ENCODE measurements at regions of chr11 and their contacts with region 1.

Region 1: GRCh38 chr11:12043959-12044819 is 35.8 kb upstream of the DKK3 start:
- DNase-seq: peak; percentile 48
- H3K4me3 Mint-ChIP-seq: no peak overlapping the region
- H3K27ac Mint-ChIP-seq: no peak overlapping the region
- H3K4me1 Mint-ChIP-seq: peaks cover 23% of the 10 kb centered on the region
- H3K27me3 Mint-ChIP-seq: peaks cover 6% of the 10 kb centered on the region

Region 2: DNA sequence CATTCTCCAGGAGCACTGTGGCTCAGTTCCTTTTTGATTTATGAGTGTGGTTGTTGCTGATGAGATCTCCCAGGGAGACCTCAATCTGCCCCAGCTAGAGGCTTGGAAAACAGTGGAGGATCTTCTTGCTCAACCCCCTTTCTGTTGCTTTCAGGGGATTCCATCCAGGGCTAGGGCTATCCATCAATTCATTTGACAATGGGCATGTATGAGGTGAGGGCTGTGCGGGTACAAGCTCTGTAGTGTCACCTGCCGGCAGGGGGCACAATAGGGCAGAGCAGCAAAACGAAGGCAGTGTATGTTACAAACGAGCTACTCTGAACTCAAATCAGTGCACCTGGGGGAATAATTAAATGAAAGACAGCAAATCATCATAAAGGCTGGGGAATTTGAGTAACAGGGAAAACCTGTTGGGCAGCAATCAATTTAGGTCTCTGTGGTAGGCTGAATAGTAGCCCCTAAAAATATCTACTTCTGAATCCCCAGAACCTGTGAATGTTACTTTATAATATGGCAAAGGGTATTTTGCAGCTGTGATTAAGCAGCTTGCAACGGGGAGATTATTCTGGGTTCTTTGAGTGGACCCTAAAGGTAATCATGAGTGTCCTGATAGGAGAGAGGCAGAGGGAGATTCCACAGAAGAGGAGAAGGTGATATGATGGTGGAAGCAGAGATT is 1016.0 kb before region 1 on chr11:
- intact Hi-C with region 1: loop called (anchors 10 kb)
- DNase-seq: peak; percentile 57
- H3K4me3 Mint-ChIP-seq: no peak overlapping the region
- H3K27ac Mint-ChIP-seq: no peak overlapping the region
- H3K4me1 Mint-ChIP-seq: no peaks in the 10 kb centered on the region
- H3K27me3 Mint-ChIP-seq: peaks cover 16% of the 10 kb centered on the region

Region 3: GRCh38 chr11:11584446-11584810 is 459.8 kb before region 1 on chr11:
- intact Hi-C with region 1: no loop called
- DNase-seq: no peak
- H3K4me3 Mint-ChIP-seq: no peak overlapping the region
- H3K27ac Mint-ChIP-seq: no peak overlapping the region
- H3K4me1 Mint-ChIP-seq: no peaks in the 10 kb centered on the region
- H3K27me3 Mint-ChIP-seq: no peaks in the 10 kb centered on the region

Region 4: GRCh38 chr11:11931461-11932055 is 112.6 kb before region 1 on chr11:
- intact Hi-C with region 1: loop called (anchors 1 kb)
- DNase-seq: no peak
- H3K4me3 Mint-ChIP-seq: no peak overlapping the region
- H3K27ac Mint-ChIP-seq: no peak overlapping the region
- H3K4me1 Mint-ChIP-seq: peaks cover 7% of the 10 kb centered on the region
- H3K27me3 Mint-ChIP-seq: no peaks in the 10 kb centered on the region

Region 5: GRCh38 chr11:12174477-12175143 is 130.4 kb after region 1 on chr11:
- intact Hi-C with region 1: loop called (anchors 1 kb)
- DNase-seq: no peak
- H3K4me3 Mint-ChIP-seq: peak overlapping the region; percentile 75
- H3K27ac Mint-ChIP-seq: peak overlapping the region; percentile 93
- H3K4me1 Mint-ChIP-seq: peaks cover 79% of the 10 kb centered on the region
- H3K27me3 Mint-ChIP-seq: peaks cover 2% of the 10 kb centered on the region

Region 6: GRCh38 chr11:12224537-12224893 is 180.3 kb after region 1 on chr11:
- intact Hi-C with region 1: loop called (anchors 1 kb)
- DNase-seq: peak; percentile 85
- H3K4me3 Mint-ChIP-seq: peak overlapping the region; percentile 68
- H3K27ac Mint-ChIP-seq: peak overlapping the region; percentile 91
- H3K4me1 Mint-ChIP-seq: peaks cover 69% of the 10 kb centered on the region
- H3K27me3 Mint-ChIP-seq: no peaks in the 10 kb centered on the region

Region 7: DNA sequence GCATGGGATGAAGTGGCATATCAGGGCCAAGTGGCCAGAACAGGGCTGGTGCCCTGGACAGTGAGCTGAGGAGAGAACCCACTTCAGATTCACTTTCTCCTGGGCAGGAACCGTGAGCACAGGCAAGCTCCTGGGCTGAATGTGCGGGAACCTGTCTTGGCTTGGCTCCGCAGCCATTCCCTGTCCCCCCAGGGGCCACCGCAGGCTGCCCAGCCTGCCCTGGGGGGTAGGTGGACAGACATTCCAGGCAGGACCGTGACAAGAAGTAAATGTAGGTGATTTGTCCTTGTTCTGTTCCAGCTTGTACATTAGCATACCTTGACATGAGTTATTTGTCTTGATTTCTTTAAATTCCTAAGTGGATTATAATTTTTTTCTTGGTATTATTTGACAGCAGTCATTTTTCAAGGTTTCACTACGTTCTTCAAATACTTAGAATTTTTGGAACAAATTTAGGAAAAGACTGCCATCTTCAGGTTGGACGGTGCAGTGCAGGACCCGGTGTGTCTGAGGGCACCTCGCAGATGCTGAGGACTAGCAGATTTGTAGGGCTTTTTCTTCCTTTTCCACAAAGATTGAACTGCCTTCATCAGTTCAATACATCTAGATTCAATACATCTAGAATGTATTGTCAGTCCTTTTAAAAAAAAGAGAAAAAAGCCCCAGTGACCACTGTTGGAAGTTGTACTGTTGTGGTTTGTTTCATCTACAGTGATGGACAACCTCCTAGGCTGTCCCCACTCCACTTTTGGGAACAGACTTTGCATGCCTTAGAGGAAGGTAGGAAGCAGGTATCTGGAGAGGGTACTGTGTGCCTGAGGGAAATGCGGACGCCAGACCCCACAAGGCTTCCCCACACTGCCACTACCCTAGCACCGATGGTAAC is 849.8 kb after region 1 on chr11:
- intact Hi-C with region 1: loop called (anchors 5 kb)
- DNase-seq: peak; percentile 18
- H3K4me3 Mint-ChIP-seq: no peak overlapping the region
- H3K27ac Mint-ChIP-seq: no peak overlapping the region
- H3K4me1 Mint-ChIP-seq: peaks cover 1% of the 10 kb centered on the region
- H3K27me3 Mint-ChIP-seq: peaks cover 17% of the 10 kb centered on the region